SK-N-SH (cell line): ENCODE measurements at regions of chr7 and their contacts with region 1.

Region 1: DNA sequence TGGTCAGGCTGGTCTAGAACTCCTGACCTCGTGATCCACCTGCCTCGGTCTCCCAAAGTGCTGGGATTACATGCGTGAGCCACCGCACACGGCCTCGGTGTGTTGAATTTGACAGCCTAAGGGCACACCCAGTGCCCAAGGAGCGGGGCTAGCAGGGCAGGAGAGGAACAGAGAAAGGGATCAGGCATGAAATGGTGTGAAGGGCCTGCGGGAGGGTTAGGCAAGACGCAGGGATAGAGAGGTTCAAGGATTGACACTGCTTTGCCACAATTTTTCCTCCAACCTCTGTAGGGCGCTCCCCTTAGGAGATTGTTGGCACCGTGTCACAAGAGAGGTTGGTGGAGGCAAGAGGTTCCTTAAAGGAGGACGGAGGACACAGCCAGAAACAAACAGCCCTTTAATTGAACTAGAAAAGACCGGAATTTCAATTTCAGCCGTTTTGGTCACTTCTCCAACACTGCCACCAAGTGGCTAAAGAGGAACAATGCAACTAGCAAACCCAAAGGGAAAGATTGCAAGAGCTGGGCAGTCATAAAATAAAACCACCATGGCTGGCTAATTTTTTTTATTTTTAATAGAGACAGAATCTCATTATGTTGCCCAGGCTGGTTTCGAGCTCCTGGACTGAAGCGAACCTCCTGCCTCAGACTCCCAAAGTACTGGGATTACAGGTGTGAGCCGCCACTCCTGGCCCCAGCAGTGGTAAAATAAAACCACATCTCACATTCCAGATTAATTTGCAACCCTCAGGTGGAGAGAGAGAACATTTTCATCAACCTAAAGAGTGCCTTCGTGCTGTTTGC is 6.9 kb upstream of the CREB3L2 start:
- DNase-seq: peak; percentile 63
- H3K4me3 ChIP-seq: no peak overlapping the region; a peak in 1 of 4 replicates
- H3K27ac ChIP-seq: no peak overlapping the region
- H3K4me1 ChIP-seq: no peaks in the 10 kb centered on the region; a peak in 1 of 4 replicates
- H3K27me3 ChIP-seq: no peaks in the 10 kb centered on the region
- CTCF ChIP-seq: peak; percentile 99
- EP300 ChIP-seq: no peak
- RAD21 ChIP-seq: peak; percentile 98

Region 2: GRCh38 chr7:137661634-137662033 is 347.1 kb before region 1 on chr7:
- CTCF ChIA-PET with region 1: interaction called, 29 read pairs
- POLR2A ChIA-PET with region 1: no interaction called
- DNase-seq: no peak
- H3K4me3 ChIP-seq: no peak overlapping the region
- H3K27ac ChIP-seq: no peak overlapping the region
- H3K4me1 ChIP-seq: peaks cover 27 to 31% of the 10 kb centered on the region in 2 experiments
- H3K27me3 ChIP-seq: no peaks in the 10 kb centered on the region
- CTCF ChIP-seq: no peak
- EP300 ChIP-seq: no peak
- RAD21 ChIP-seq: no peak

Region 3: GRCh38 chr7:137920637-137921399 is 87.9 kb before region 1 on chr7:
- CTCF ChIA-PET with region 1: interaction called, 642 read pairs
- POLR2A ChIA-PET with region 1: no interaction called
- DNase-seq: no peak
- H3K4me3 ChIP-seq: no peak overlapping the region
- H3K27ac ChIP-seq: no peak overlapping the region
- H3K4me1 ChIP-seq: peaks cover 9 to 15% of the 10 kb centered on the region in 2 experiments; a peak in 3 of 4 replicates
- H3K27me3 ChIP-seq: no peaks in the 10 kb centered on the region
- CTCF ChIP-seq: no peak
- EP300 ChIP-seq: no peak
- RAD21 ChIP-seq: no peak

Region 4: DNA sequence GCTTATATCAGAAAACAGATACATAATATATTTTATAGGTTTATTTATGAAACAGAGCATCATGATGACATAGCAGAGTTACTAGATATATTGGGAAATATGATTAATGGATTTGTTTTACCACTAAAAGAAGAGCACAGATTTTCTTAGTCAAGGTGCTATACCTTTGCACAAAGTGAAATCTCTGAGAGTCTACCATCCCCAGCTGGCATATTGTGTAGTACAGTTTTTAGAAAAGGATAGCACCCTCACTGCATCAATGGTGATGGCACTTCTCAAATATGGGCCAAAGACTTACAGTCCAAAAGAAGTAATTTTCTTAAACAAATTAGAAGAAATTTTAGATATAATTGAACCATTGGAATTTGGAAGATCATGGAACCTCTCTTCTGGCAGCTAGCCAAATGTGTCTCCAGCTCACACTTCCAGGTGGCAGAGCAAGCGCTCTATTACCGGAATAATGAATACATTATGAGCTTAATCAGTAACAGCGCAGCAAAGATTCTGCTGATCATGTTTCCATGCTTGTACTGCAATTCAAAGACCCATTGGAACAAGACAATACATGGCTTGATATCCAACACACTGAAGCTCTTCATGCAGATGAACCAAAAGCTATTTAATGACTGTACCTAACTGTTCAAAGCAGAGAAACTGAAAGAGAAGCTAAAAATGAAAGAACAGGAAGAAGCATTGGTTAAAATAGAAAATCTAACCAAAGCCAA is 15.0 kb after region 1 on chr7:
- CTCF ChIA-PET with region 1: interaction called, 36 read pairs
- POLR2A ChIA-PET with region 1: interaction called, 3 read pairs
- DNase-seq: no peak
- H3K4me3 ChIP-seq: no peak overlapping the region
- H3K27ac ChIP-seq: no peak overlapping the region
- H3K4me1 ChIP-seq: no peaks in the 10 kb centered on the region
- H3K27me3 ChIP-seq: no peaks in the 10 kb centered on the region; the same call in 1 of the 2 replicates
- CTCF ChIP-seq: no peak
- EP300 ChIP-seq: no peak
- RAD21 ChIP-seq: no peak

Region 5: GRCh38 chr7:138151731-138152577 is 143.2 kb after region 1 on chr7:
- CTCF ChIA-PET with region 1: no interaction called
- POLR2A ChIA-PET with region 1: no interaction called
- DNase-seq: no peak
- H3K4me3 ChIP-seq: no peak overlapping the region
- H3K27ac ChIP-seq: no peak overlapping the region
- H3K4me1 ChIP-seq: peaks cover 0 to 2% of the 10 kb centered on the region in 2 experiments; a peak in 1 of 4 replicates
- H3K27me3 ChIP-seq: no peaks in the 10 kb centered on the region
- CTCF ChIP-seq: no peak
- EP300 ChIP-seq: no peak
- RAD21 ChIP-seq: no peak